Mammary epithelial cell (primary cell): ENCODE measurements at regions of chr3 and their contacts with region 1.

Region 1: DNA sequence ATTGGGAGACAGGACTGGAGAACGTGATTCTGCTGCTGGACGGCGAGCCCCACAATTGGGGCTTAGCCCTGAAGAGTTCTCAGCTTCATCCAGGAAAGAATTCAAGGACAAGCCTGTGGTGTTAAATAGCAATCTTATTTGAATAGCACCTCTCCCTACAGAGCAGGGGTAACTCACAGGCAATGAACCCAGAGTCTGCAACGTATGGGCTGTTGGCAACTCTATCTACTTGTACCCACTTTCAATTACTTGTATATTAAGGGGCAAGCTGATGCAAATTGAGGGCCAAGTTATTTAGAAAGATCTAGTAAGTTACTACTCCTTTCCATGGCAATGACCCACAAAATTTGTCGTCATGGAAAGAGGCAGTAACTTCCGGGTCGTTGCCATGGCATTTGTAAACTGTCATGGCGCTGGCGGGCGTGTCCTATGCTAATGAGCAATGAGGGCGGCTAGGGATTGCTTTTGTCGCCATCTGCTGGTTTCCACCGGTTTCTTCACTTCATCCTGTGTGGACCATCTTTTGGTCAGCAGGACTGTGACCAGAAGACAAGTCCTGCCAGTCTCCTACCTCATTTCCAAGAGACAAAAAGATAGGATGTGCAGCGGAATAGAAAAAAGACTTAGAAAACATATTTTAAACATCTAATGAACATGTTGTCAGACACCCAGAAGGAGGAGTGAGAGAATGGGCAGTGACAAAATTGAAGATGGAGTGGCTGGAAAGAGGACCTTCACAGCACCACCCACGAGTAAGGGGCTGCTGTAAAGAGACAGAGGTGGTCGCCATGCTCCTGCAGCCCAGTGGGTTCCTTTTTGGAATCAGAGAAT is 45.8 kb upstream of the SH3BP5 start:
- DNase-seq: peak; percentile 85
- H3K4me3 ChIP-seq: no peak overlapping the region
- H3K27ac ChIP-seq: peak overlapping the region; percentile 85
- H3K4me1 ChIP-seq: no peaks in the 10 kb centered on the region
- H3K27me3 ChIP-seq: no peaks in the 10 kb centered on the region
- CTCF ChIP-seq: peak; percentile 91 to 92

Region 2: DNA sequence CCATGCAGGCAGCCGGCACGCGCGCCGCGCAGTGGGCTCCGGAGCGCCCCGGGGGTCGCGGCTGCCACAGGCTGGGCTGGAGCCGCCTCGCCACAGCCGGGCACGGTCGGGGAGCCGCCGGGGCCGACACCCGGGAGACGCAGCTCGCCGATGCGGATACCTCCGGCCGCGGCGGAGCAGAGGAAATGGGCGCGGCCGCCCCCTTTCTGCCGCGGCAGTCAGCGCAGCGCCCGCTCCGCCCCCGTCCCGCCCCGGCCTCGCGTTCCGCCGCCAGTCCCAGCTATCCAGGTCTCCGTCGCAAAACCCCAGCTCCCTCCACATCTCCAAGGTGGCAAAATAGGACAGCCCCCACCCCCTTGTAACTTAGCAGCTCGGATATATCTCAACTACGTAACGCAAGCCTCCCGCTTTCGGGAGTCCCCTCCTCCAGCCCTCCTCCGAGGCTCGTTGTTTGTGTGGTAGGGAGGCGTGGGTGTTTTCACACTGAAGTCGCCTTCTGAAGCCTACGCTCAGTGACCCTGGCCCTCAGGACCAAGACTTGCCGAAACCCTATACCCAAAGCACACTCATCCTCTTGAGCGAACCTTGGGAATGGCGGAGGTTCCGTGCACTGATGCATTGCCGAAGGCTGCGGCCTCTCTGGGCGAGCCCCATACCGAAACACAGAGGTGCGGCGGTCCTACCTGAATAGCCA is 45.6 kb before region 1 on chr3 and contains the start of gene SH3BP5:
- CTCF ChIA-PET with region 1: no interaction called
- dilution Hi-C with region 1: no loop called
- in situ Hi-C with region 1: no loop called
- intact Hi-C with region 1: loop called (anchors 1 kb)
- DNase-seq: peak; percentile 68
- H3K4me3 ChIP-seq: peak within 1 kb of the TSS; percentile 84 to 91 (median 89)
- H3K27ac ChIP-seq: peak within 1 kb of the TSS; percentile 34
- H3K4me1 ChIP-seq: peaks cover 19% of the 10 kb centered on the region
- H3K27me3 ChIP-seq: no peaks in the 10 kb centered on the region
- CTCF ChIP-seq: peak; percentile 22 to 64
- total RNA-seq, gene SH3BP5: 15.4 to 21.0 TPM